Panc1 (cell line): ENCODE measurements at regions of chr12 and their contacts with region 1.

Region 1: DNA sequence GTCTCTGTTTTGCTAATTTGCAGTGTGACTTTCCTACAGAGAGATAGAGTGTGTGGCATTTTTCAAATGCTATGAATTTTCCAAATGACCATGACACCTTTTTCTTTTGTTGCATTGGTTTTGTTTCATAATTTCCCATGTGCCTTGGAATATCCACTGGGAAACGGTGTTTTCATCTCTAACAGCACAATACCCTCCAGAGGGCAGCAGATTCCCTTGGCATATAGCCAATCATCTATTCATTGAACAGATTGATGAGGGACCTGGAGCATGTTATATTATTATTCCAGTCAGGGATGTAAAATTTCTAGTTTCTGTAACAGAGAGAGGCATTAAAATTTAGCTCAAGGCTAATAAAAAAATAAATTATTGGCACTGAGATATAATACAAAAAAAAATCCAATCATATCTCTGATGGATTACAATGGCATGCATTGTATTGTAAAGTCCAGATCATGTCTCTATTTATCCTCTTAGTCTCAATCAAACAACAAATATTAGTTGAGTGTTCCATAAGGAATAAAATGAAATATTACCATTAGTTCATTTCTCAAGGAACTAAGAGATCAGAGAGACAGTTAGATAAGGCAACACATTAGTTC is 29.6 kb upstream of the NTN4 start:
- DNase-seq: no peak
- ATAC-seq: no peak; the same call in 1 of the 2 replicates
- H3K4me3 ChIP-seq: no peak overlapping the region
- H3K27ac ChIP-seq: no peak overlapping the region
- H3K4me1 ChIP-seq: no peaks in the 10 kb centered on the region
- H3K27me3 ChIP-seq: peaks cover 3% of the 10 kb centered on the region; the same call in 1 of the 2 replicates
- CTCF ChIP-seq: peak; percentile 59; the same call in 1 of the 2 replicates

Region 2: GRCh38 chr12:95582230-95583058 is 237.8 kb before region 1 on chr12:
- CTCF ChIA-PET with region 1: no interaction called
- POLR2A ChIA-PET with region 1: no interaction called
- in situ Hi-C with region 1: no loop called
- intact Hi-C with region 1: loop called (anchors 1 kb)
- DNase-seq: no peak
- ATAC-seq: peak; percentile 85
- H3K4me3 ChIP-seq: no peak overlapping the region
- H3K27ac ChIP-seq: no peak overlapping the region
- H3K4me1 ChIP-seq: no peaks in the 10 kb centered on the region
- H3K27me3 ChIP-seq: no peaks in the 10 kb centered on the region
- CTCF ChIP-seq: peak; percentile 65; the same call in 1 of the 2 replicates

Region 3: DNA sequence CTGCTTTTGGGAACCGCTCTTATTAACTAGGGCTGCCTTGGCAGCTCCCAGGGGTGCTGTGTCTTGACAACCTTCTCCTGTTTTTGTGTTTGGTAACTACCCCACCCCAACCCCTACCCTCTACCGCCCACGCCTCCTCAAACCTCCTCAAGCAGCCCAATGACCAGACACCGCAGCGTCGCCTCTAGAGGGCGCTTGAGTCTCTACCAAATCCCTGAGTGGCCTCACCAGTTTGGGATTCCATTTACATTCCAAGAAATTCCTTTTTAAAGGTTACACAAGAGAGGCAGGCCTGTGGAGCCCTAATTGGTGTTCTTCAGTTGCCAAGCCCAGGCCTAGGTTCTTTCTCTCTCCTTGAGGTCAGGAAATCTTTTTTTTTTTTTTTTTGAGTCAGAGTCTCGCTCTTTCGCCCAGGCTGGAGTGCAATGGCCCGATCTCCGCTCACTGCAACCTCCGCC is 196.6 kb before region 1 on chr12:
- CTCF ChIA-PET with region 1: interaction called, 8 read pairs
- POLR2A ChIA-PET with region 1: no interaction called
- in situ Hi-C with region 1: no loop called
- intact Hi-C with region 1: loop called (anchors 5 kb)
- DNase-seq: no peak
- ATAC-seq: peak; percentile 95
- H3K4me3 ChIP-seq: no peak overlapping the region
- H3K27ac ChIP-seq: no peak overlapping the region
- H3K4me1 ChIP-seq: 0 out of 2 replicates have a peak, but pooled peaks cover 4% of the 10 kb centered on the region
- H3K27me3 ChIP-seq: no peaks in the 10 kb centered on the region; the same call in 1 of the 2 replicates
- CTCF ChIP-seq: peak; percentile 88

Region 4: GRCh38 chr12:95790033-95790911 is 29.9 kb before region 1 on chr12 and contains the start of gene NTN4:
- CTCF ChIA-PET with region 1: interaction called, 10 read pairs
- POLR2A ChIA-PET with region 1: no interaction called
- in situ Hi-C with region 1: no loop called
- intact Hi-C with region 1: no loop called
- DNase-seq: no peak
- ATAC-seq: peak; percentile 69
- H3K4me3 ChIP-seq: peak within 1 kb of the TSS; percentile 56 to 83
- H3K27ac ChIP-seq: peak within 1 kb of the TSS; percentile 54; the same call in 1 of the 2 replicates
- H3K4me1 ChIP-seq: peaks cover 2% of the 10 kb centered on the region; the same call in 1 of the 2 replicates
- H3K27me3 ChIP-seq: peaks cover 28% of the 10 kb centered on the region
- CTCF ChIP-seq: no peak
- total RNA-seq, gene NTN4: 17.1 TPM